G401 (cell line): ENCODE measurements at regions of chr11 and their contacts with region 1.

Region 1: GRCh38 chr11:33257897-33258630 is 883 bp downstream of the HIPK3 start:
- DNase-seq: peak; percentile 69

Region 2: GRCh38 chr11:33063326-33063881 is 194.7 kb before region 1 on chr11:
- in situ Hi-C with region 1: no loop called
- DNase-seq: no peak

Region 3: DNA sequence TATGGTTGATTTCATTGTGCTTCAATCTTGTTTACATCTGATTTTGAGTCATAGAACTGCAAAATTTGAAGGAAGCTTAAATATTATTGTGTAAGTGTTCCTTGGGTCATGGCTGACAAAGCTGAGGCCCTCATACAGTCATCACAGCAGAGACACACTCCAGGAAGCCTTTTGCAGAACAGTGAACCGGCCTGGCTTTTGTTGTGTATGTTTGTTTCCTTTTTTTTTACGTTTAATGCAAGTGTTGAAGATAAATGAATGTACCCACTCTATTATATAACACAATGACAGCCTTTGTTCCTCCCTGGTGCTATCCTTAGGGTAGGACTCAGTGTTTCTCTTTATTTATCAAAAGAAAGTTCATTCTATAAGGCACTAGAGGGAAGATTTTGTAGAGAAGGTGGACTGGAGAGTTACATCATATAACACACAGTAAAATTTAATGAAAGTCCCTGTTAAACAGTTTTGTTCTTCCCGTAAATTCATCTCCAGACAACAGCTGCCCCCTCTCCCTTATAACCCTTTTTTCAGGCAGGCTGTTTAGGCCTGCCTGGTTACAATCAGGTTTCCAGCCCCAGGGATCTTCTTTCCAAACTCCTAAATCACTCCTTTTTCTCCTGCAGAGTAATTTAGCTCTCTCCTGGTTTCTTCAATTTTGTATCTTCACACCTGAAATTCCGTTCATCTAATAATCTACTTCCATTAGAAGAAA is 62.4 kb before region 1 on chr11:
- in situ Hi-C with region 1: no loop called
- DNase-seq: no peak

Region 4: GRCh38 chr11:33222052-33222750 is 35.9 kb before region 1 on chr11:
- in situ Hi-C with region 1: loop called (anchors 5 kb)
- DNase-seq: no peak

Region 5: DNA sequence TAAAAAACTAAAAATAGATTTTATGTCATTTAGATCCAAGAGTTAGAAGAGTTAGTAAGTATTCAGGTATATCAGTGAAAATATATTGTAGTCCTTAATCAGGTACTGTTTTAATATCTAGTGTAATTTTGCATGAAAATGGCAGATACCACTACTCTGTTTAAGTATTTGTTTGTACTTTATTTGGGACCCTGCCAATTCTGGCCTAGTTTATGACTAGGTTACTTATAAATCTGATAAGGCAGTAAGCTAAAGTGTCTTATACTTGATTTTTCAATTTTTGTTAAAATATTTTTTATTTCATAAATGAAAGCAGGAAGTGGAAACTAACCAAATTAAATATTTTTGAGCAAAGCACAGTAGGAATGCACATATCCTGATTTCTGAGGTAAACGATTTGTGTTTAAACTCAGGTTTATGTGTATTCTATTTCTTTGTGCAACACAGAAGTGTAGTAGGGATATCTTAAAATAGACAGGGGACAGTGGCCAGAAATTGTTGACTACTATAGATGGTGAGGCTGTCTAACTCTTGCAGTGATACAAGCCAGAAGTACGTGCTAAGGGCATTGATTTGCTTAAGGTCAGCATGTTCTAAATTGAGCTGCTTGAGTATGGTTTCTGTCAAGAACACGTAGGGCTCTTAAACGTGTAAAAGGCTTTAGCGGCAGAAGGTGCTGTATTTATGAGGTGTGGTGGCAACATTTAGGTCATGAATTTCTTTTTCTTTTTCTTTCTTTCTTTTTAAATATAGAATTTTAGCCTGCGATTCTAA is 33.1 kb after region 1 on chr11:
- in situ Hi-C with region 1: no loop called
- DNase-seq: peak; percentile 43

Region 6: GRCh38 chr11:33687733-33688479 is 429.8 kb after region 1 on chr11:
- in situ Hi-C with region 1: no loop called
- DNase-seq: peak; percentile 89